Left colon (tissue), 2 donors: ENCODE measurements at regions of chr10 and their contacts with region 1.

Region 1: GRCh38 chr10:97072851-97073665 is 112.7 kb downstream of the SLIT1 start:
- DNase-seq: peak; percentile 51 to 86
- ATAC-seq: peak; percentile 78

Region 2: GRCh38 chr10:97210543-97210961 is 137.5 kb after region 1 on chr10:
- intact Hi-C with region 1: loop called (anchors 5 kb)
- DNase-seq: peak in 1 of 2 donors; percentile 72
- ATAC-seq: peak; percentile 59

Region 3: GRCh38 chr10:97222326-97222961 is 149.4 kb after region 1 on chr10:
- intact Hi-C with region 1: loop called in 1 of 2 experiments (anchors 5 kb)
- DNase-seq: no peak
- ATAC-seq: no peak